Activated B cell treated with CpG ODN at 0.5 μM for 24 hours (primary cell): ENCODE measurements at regions of chr1 and their contacts with region 1.

Region 1: GRCh38 chr1:53278201-53278725 is 39.9 kb upstream of the MAGOH start:
- DNase-seq: peak; percentile 64
- ATAC-seq: peak; percentile 87
- H3K4me3 Mint-ChIP-seq: no peak overlapping the region
- H3K27ac Mint-ChIP-seq: no peak overlapping the region
- H3K4me1 Mint-ChIP-seq: no peaks in the 10 kb centered on the region
- H3K27me3 Mint-ChIP-seq: no peaks in the 10 kb centered on the region
- CTCF ChIP-seq: peak; percentile 73

Region 2: DNA sequence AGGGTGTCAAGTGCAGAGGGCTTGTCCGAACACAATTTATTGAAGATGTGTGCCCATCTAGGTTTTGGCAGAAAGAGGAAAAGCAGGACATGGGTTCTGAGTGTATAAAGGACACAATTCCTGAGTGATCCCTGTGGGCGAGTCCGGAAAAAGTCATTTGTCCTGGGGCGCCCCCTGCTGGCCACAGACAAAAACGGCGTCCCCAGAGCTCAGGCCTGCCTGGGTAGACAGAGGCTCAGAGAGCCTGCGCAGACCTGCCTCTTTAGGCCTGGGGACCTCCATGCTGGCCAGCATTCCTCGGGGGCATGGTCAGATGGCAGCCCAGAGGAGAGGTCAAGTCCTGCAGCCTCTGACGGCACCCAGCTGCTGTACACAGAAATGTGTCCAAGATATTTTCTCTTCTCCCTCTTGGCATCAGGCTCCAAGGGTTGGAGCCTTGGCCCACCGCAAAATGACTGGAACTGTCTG is 115.1 kb after region 1 on chr1:
- CTCF ChIA-PET with region 1: interaction called, 214 read pairs
- POLR2A ChIA-PET with region 1: interaction called, 10 read pairs
- intact Hi-C with region 1: loop called (anchors 1 kb)
- DNase-seq: peak; percentile 73
- ATAC-seq: peak; percentile 80
- H3K4me3 Mint-ChIP-seq: no peak overlapping the region
- H3K27ac Mint-ChIP-seq: no peak overlapping the region
- H3K4me1 Mint-ChIP-seq: peaks cover 13% of the 10 kb centered on the region
- H3K27me3 Mint-ChIP-seq: peaks cover 2% of the 10 kb centered on the region
- CTCF ChIP-seq: peak; percentile 43

Region 3: DNA sequence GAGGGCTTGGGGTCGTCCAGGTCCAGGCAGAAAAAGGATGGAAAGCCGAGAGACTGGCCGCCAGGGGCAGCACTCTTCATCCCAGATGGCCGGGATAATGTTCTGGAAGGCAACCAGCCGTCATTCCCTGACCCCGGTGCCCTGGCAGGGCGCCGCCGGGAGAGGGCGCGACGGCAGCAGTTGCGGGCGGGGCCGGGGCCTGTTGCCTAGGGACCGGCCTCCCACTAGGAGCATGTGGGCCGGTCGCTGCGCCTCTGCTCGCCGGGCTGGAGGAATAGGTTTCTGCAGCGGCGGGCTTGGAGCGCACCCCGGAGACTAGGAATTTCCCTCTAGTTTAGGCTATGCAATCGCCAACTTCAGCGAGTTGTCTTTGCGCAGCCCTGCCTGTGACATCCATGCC is 191.9 kb after region 1 on chr1:
- CTCF ChIA-PET with region 1: interaction called, 3 read pairs
- POLR2A ChIA-PET with region 1: no interaction called
- intact Hi-C with region 1: loop called (anchors 5 kb)
- DNase-seq: no peak
- ATAC-seq: no peak
- H3K4me3 Mint-ChIP-seq: no peak overlapping the region
- H3K27ac Mint-ChIP-seq: no peak overlapping the region
- H3K4me1 Mint-ChIP-seq: no peaks in the 10 kb centered on the region
- H3K27me3 Mint-ChIP-seq: no peaks in the 10 kb centered on the region
- CTCF ChIP-seq: no peak

Region 4: GRCh38 chr1:53754484-53755312 is 476.4 kb after region 1 on chr1:
- CTCF ChIA-PET with region 1: no interaction called
- POLR2A ChIA-PET with region 1: no interaction called
- intact Hi-C with region 1: loop called (anchors 1 kb)
- DNase-seq: no peak
- ATAC-seq: no peak
- H3K4me3 Mint-ChIP-seq: no peak overlapping the region
- H3K27ac Mint-ChIP-seq: no peak overlapping the region
- H3K4me1 Mint-ChIP-seq: no peaks in the 10 kb centered on the region
- H3K27me3 Mint-ChIP-seq: no peaks in the 10 kb centered on the region
- CTCF ChIP-seq: no peak